Motor neuron (in vitro differentiated cells): ENCODE measurements at regions of chr18 and their contacts with region 1.

Region 1: DNA sequence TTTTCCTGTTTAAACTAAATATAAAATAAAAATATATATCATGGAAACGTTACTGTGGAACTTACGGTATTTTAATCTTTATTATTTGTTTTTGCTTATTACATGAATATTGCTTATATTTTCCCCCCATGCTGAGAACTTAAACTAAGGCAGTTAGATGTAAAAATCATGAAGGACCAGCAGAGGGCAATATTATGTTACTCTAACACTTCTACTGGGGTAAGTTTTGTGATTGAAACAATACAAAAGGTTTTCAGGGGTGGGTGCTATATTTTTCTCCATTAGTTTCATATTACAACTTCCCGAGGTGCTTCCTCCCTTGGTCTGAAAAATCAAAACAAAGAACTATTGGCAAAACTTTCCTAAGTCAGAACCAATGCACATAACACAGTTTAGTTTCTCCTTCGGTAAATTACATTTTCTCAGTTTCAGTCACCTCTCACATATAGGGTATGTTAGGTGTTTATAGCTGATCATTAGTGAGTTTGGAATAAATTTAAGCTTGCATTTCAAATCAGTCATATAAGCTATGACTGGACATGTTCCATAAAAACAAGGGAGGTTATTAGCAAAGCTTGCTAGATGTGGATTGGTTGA is 54.8 kb downstream of the ZNF407 start:
- ATAC-seq: peak in 6 of 8 experiments; percentile 28 to 70 (median 49)
- H3K4me3 ChIP-seq: no peak overlapping the region
- H3K27ac ChIP-seq: no peak overlapping the region
- H3K4me1 ChIP-seq: peaks cover 5 to 46% of the 10 kb centered on the region in 2 donors

Region 2: DNA sequence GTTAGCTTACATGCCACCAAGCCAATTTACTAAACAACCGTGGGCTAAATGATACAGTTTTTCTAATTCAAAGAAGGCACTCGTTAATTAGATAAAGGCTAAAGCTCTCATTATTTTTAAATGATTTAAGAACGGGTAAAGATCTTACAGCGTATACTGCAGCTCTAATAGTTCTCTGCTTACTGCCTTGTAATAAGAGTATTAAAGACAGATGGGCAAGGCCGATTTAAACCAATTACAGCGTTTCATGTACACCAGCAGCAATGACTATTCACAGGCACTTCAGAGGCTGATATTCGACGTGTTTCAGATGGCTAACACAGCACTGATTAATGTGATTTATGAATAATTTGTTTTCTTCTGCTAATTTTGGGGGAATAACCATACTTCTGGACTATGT is 204.4 kb after region 1 on chr18:
- in situ Hi-C with region 1: no loop called
- ATAC-seq: peak in 5 of 8 experiments; percentile 39 to 54 (median 53)
- H3K4me3 ChIP-seq: no peak overlapping the region
- H3K27ac ChIP-seq: no peak overlapping the region
- H3K4me1 ChIP-seq: peaks cover 10 to 30% of the 10 kb centered on the region in 2 donors

Region 3: GRCh38 chr18:75111722-75112121 is 459.2 kb after region 1 on chr18:
- in situ Hi-C with region 1: no loop called
- ATAC-seq: peak in 5 of 8 experiments; percentile 29 to 78 (median 66)
- H3K4me3 ChIP-seq: no peak overlapping the region
- H3K27ac ChIP-seq: no peak overlapping the region
- H3K4me1 ChIP-seq: peaks cover 40 to 57% of the 10 kb centered on the region in 2 donors

Region 4: DNA sequence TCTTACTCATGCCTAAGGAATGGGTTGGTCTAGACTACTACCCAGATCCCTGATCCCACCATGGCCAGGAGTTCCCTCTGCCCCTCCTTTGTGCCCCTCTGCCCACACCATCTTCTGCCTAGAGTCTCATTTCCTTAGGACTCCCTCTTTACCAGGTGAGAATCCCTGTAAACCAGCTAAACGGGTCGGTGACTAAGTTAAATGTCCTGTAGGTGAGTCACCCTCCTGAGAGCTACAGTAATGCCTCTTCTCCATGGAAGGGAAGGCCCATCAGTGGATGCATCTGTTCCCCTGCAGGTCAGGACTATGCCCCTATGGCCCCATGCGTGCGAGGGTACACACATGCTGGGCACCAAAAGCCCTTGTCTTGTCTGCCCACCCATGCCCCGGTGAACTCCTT is 531.0 kb after region 1 on chr18:
- in situ Hi-C with region 1: loop called in 1 of 9 experiments (anchors 25 kb)
- ATAC-seq: no peak
- H3K4me3 ChIP-seq: no peak overlapping the region
- H3K27ac ChIP-seq: no peak overlapping the region
- H3K4me1 ChIP-seq: no peaks in the 10 kb centered on the region

Region 5: DNA sequence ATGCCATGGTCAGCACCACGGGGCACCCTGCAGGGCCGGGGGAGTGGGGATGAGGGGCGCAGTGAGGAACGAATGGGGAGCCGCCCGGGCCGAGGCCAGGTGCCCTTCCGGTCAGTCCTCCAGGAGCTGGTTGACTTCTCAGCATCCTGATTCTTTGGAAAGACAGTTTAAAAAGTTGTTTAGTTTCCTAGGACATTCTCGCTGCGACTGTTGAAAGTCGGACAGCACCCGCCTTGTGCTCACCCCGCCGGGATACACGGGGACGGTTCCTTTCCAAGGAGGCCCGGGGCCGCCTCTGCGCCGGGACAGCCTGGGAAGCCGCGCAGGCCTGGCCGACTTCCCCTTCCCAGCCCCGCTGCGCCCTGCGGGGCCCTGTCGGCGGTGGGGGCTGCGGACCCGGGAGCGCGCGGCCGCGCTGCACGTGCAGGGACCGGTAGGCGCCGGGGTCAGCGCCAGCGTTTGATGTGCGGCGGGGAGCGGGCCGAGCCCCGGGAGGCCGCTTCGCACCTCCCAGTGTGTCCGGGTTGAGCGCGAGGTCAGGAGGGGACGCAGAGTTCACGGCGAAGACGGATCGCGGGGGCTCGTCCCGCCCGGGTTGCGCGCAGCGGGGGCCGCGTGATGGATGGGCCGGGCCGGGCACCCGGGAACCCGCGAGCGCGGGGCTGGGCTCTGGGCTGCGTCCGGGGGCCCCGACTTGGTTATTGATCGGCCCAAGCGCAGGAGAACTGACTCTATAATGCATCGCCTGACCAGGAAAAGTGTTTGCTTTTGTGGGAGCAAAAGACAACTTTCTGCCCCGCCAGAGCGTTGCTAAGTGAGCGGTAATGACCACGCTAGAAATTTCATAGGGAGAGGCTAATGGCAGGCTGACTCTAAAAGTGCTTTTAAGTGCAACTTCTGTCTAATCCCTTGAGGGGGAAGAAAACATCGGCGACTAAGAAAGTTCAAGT is 803.0 kb after region 1 on chr18:
- in situ Hi-C with region 1: loop called in 1 of 9 experiments (anchors 25 kb)
- ATAC-seq: peak; percentile 71 to 92 (median 86)
- H3K4me3 ChIP-seq: peak overlapping the region; percentile 27 to 40 (median 34)
- H3K27ac ChIP-seq: peak overlapping the region; percentile 60 to 78
- H3K4me1 ChIP-seq: peaks cover 23 to 24% of the 10 kb centered on the region in 2 donors

Region 6: DNA sequence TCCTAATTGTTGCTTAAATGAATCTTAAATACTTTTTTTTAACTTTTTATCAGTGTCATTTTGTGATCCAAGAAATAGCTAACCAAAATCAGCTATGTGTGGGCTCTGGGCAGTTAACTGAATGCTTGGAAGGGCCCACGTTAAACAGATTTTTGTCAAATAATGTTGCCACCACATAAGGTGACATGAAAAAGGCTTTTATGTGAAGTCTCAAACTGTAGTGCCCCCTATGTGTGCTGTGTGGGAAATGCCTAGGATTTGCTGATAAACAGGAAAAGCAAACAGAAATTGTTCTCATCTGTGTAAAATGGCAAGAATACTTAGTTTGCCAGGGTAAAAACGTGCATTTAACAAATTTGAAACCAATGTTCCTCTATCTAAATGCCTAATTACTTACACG is 1600.4 kb after region 1 on chr18:
- in situ Hi-C with region 1: loop called in 2 of 9 experiments (anchors 10 to 25 kb)
- ATAC-seq: peak in 1 of 8 experiments; percentile 17
- H3K4me3 ChIP-seq: no peak overlapping the region
- H3K27ac ChIP-seq: no peak overlapping the region
- H3K4me1 ChIP-seq: peaks cover 12 to 30% of the 10 kb centered on the region in 2 donors